Heart right ventricle (tissue), 16 donors: ENCODE measurements at regions of chr17 and their contacts with region 1.

Region 1: DNA sequence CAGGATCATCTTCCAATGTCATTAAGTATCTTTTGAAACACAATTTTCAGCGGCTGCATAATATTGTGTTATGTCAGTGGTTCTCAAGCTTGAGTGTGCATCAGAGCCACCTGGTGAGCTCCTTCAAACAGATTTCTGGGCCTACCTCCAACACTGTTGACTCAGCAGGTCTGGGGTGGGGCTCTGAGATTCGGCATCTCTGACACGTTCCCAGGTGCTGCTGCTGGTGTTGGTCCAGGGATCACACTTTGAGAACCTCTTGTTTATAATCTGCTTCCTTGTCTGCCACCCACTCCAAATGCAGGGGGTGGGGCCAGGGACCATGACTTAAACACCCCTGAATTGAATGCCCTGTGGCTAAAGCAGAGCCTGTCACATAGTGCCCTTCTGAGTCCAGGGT is 73.8 kb upstream of the HNF1B start:
- DNase-seq: no peak
- ATAC-seq: no peak
- H3K4me3 ChIP-seq: no peak overlapping the region
- H3K27ac ChIP-seq: no peak overlapping the region
- H3K4me1 ChIP-seq: peaks cover 0 to 18% (median 0%) of the 10 kb centered on the region in 9 donors
- H3K27me3 ChIP-seq: peaks cover 0 to 30% (median 11%) of the 10 kb centered on the region in 7 donors
- CTCF ChIP-seq: no peak

Region 2: DNA sequence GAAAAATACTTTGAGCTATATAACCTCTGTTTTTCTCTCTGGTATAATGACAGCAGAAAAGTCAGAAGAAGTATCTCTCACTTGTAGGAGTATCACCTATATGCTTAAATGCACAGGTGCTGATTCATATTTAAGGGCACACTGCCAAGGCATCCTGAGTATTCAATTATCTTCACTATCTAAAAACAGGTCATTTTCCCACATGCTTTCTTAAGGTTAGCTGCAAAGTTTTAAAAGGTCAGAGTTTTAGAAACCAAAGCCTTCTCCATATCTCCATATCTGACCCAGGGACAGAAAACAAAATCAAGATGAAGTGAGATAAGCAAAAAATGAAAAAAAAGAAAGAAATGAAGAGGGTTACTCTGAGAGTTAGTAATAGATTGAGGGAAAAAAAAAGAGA is 542.2 kb before region 1 on chr17:
- intact Hi-C with region 1: loop called in 1 of 10 experiments (anchors 5 kb)
- DNase-seq: no peak
- ATAC-seq: no peak
- H3K4me3 ChIP-seq: no peak overlapping the region
- H3K27ac ChIP-seq: no peak overlapping the region
- H3K4me1 ChIP-seq: peaks cover 0 to 7% (median 0%) of the 10 kb centered on the region in 9 donors
- H3K27me3 ChIP-seq: no peaks in the 10 kb centered on the region
- CTCF ChIP-seq: no peak

Region 3: DNA sequence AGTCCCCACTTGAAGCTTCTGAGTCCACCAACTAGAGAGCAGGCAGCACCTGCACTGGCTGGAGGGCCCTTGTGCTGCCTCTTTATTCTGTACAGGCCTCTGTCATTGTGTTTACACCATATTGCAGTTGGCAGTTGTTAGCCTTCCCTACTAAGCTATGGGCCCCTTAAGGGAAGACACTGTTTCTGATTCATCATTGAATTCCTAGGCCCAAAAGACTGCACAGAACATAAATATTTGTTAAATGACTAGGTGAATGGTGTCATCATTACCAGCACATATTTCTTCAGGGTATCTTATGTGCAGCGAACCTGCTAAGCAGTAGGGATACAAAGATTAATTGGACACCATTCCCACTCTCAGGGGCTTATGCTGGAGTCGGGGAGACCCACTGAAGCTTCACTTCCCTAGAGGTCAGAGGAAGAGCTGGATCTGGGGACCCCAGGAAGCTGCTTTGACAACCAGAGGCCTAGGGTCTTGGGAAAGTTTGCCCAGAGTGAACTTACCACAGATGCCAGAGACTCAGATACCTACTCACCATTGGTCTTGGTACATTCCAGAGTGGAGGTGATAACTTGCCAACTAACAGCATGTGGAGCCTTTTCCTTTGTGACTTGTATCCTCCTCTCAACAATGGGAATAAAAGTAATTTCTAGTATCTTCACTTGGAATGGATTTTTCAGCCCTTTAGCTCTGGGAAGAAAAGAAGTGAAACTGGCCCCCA is 146.7 kb before region 1 on chr17:
- intact Hi-C with region 1: no loop called
- DNase-seq: no peak
- ATAC-seq: no peak
- H3K4me3 ChIP-seq: no peak overlapping the region
- H3K27ac ChIP-seq: no peak overlapping the region
- H3K4me1 ChIP-seq: no peaks in the 10 kb centered on the region
- H3K27me3 ChIP-seq: peaks cover 0 to 6% (median 5%) of the 10 kb centered on the region in 7 donors
- CTCF ChIP-seq: no peak

Region 4: GRCh38 chr17:37710344-37710886 is 108.3 kb before region 1 on chr17:
- intact Hi-C with region 1: no loop called
- DNase-seq: no peak
- ATAC-seq: no peak
- H3K4me3 ChIP-seq: no peak overlapping the region
- H3K27ac ChIP-seq: no peak overlapping the region
- H3K4me1 ChIP-seq: no peaks in the 10 kb centered on the region
- H3K27me3 ChIP-seq: peaks cover 0 to 45% (median 22%) of the 10 kb centered on the region in 7 donors
- CTCF ChIP-seq: no peak

Region 5: GRCh38 chr17:37761059-37761458 is 57.6 kb before region 1 on chr17:
- intact Hi-C with region 1: no loop called
- DNase-seq: no peak
- ATAC-seq: no peak
- H3K4me3 ChIP-seq: no peak overlapping the region
- H3K27ac ChIP-seq: no peak overlapping the region
- H3K4me1 ChIP-seq: peaks cover 0 to 7% (median 0%) of the 10 kb centered on the region in 9 donors
- H3K27me3 ChIP-seq: peaks cover 0 to 90% (median 45%) of the 10 kb centered on the region in 7 donors
- CTCF ChIP-seq: no peak

Region 6: GRCh38 chr17:37774504-37774903 is 44.2 kb before region 1 on chr17:
- intact Hi-C with region 1: no loop called
- DNase-seq: no peak
- ATAC-seq: no peak
- H3K4me3 ChIP-seq: no peak overlapping the region
- H3K27ac ChIP-seq: no peak overlapping the region
- H3K4me1 ChIP-seq: no peaks in the 10 kb centered on the region
- H3K27me3 ChIP-seq: peaks cover 0 to 25% (median 0%) of the 10 kb centered on the region in 7 donors
- CTCF ChIP-seq: no peak